ENCODE measurements at regions of chr1 and their contacts with region 1.

Region 1: GRCh38 chr1:7646981-7647901 is 123.9 kb upstream of the VAMP3 start:
- DNase-seq: peak; percentile 31 to 93
- H3K4me3 ChIP-seq: no peak overlapping the region
- CTCF ChIP-seq: no peak
- POLR2A ChIP-seq: no peak

Region 2: GRCh38 chr1:6724516-6725141 is 922.6 kb before region 1 on chr1:
- intact Hi-C with region 1: loop called (anchors 5 kb)
- DNase-seq: no peak
- H3K4me3 ChIP-seq: no peak overlapping the region
- CTCF ChIP-seq: no peak
- POLR2A ChIP-seq: no peak

Region 3: GRCh38 chr1:7050751-7051668 is 596.2 kb before region 1 on chr1:
- intact Hi-C with region 1: loop called (anchors 10 kb)
- DNase-seq: peak in 1 of 2 donors; percentile 29
- H3K4me3 ChIP-seq: no peak overlapping the region
- CTCF ChIP-seq: no peak
- POLR2A ChIP-seq: no peak